Dendritic cell treated with granulocyte-macrophage colony-stimulating factor and Interleukin-4, amounts not matched to agents 40 ng/mL and 50 ng/mL, for 4 days (primary cell): ENCODE measurements at regions of chr15 and their contacts with region 1.

Region 1: GRCh38 chr15:25501828-25502446 is 63.1 kb upstream of the UBE3A start:
- H3K4me3 Mint-ChIP-seq: no peak overlapping the region
- H3K27ac Mint-ChIP-seq: no peak overlapping the region
- H3K4me1 Mint-ChIP-seq: no peaks in the 10 kb centered on the region
- H3K27me3 Mint-ChIP-seq: no peaks in the 10 kb centered on the region

Region 2: DNA sequence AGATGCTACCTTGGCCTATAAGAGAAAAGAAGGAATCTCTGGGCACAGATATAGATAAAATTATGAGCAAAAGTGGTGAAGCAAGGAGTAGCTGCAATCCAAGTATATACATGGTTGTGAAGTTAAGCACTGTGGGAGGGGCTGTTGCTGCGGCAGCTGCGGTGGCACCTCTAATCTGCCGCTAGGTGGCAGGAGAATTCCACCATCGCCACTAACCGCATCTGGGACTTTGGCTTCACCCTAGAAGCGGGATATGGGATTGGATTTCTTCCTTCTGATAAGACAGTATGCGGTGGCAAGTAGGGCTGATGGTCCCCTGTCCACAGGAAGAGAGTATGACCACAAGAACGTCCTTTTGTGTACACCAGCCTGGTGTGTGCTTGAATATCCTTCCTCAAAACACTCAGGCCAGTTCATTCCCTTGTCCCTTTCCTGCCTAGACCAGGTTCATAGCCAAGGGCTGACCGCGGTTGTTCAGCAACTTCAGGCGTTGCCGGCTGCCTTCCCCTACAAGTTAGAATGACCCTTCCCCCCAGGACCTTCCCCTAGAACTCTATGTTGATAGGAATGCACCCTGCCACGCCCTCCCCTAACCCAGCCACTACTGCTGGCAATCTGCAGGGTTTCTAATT is 1859.4 kb before region 1 on chr15:
- intact Hi-C with region 1: loop called (anchors 5 kb)
- H3K4me3 Mint-ChIP-seq: no peak overlapping the region
- H3K27ac Mint-ChIP-seq: no peak overlapping the region
- H3K4me1 Mint-ChIP-seq: no peaks in the 10 kb centered on the region
- H3K27me3 Mint-ChIP-seq: peaks cover 5% of the 10 kb centered on the region

Region 3: GRCh38 chr15:25136119-25136518 is 365.8 kb before region 1 on chr15:
- intact Hi-C with region 1: loop called (anchors 5 kb)
- H3K4me3 Mint-ChIP-seq: no peak overlapping the region
- H3K27ac Mint-ChIP-seq: no peak overlapping the region
- H3K4me1 Mint-ChIP-seq: no peaks in the 10 kb centered on the region
- H3K27me3 Mint-ChIP-seq: no peaks in the 10 kb centered on the region

Region 4: GRCh38 chr15:25738171-25738965 is 236.4 kb after region 1 on chr15:
- intact Hi-C with region 1: no loop called
- H3K4me3 Mint-ChIP-seq: no peak overlapping the region
- H3K27ac Mint-ChIP-seq: no peak overlapping the region
- H3K4me1 Mint-ChIP-seq: peaks cover 40% of the 10 kb centered on the region
- H3K27me3 Mint-ChIP-seq: peaks cover 22% of the 10 kb centered on the region